Ascending aorta (tissue), 2 donors: ENCODE measurements at regions of chr5 and their contacts with region 1.

Region 1: GRCh38 chr5:172795318-172795977 is 24.5 kb upstream of the DUSP1 start:
- DNase-seq: peak; percentile 93 to 99
- H3K4me3 ChIP-seq: peak overlapping the region in 1 of 2 donors; percentile 33
- H3K27ac ChIP-seq: peak overlapping the region; percentile 94 to 95
- H3K4me1 ChIP-seq: peaks cover 23 to 75% of the 10 kb centered on the region in 2 donors
- H3K27me3 ChIP-seq: no peaks in the 10 kb centered on the region
- CTCF ChIP-seq: no peak

Region 2: GRCh38 chr5:172733131-172733973 is 62.1 kb before region 1 on chr5:
- intact Hi-C with region 1: loop called (anchors 5 kb)
- DNase-seq: peak; percentile 71 to 97
- H3K4me3 ChIP-seq: peak overlapping the region in 1 of 2 donors; percentile 34
- H3K27ac ChIP-seq: peak overlapping the region; percentile 96 to 97
- H3K4me1 ChIP-seq: peaks cover 23 to 37% of the 10 kb centered on the region in 2 donors
- H3K27me3 ChIP-seq: no peaks in the 10 kb centered on the region
- CTCF ChIP-seq: no peak

Region 3: GRCh38 chr5:172816901-172817564 is 21.6 kb after region 1 on chr5:
- intact Hi-C with region 1: no loop called
- DNase-seq: no peak
- H3K4me3 ChIP-seq: no peak overlapping the region
- H3K27ac ChIP-seq: no peak overlapping the region
- H3K4me1 ChIP-seq: no peaks in the 10 kb centered on the region
- H3K27me3 ChIP-seq: no peaks in the 10 kb centered on the region
- CTCF ChIP-seq: no peak

Region 4: DNA sequence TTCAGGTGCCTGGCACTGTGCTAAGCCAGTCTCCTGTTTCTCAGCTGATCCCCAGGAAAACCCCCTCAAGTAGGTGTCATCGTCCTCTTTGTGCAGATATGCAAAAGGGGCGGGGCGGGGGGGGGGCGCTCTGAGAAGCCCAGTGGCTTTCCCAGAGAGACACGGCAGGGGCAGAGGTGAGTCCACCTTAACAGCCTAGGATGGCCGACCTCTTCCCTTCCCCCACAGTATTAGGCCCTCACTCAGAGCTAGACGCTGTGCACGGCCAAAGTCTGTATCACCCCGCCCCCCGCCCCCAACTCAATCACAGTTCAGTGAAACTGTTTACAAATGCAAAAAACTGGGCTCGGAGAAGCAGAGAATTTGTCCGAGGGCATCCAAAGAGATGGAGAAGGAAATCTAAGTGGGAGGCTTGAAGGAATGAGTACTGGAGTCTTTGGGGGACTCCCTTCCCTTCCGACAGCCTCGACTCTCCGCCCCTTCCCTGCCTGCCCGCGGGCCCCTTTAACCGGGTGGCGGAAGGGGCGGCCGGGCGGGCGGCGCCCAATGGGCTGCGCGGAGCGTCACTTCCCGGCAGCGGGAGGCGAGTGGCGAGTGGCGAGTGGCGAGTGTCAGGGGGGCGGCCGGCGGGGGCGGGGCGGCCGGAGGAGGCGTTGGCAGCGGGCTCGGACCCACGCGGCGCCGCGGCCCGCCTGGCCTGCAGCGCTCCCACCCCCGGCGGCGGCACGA is 38.4 kb after region 1 on chr5 and contains the start of gene ERGIC1:
- intact Hi-C with region 1: loop called (anchors 2 kb)
- DNase-seq: peak in 1 of 2 donors; percentile 92
- H3K4me3 ChIP-seq: peak within 1 kb of the TSS; percentile 81 to 95
- H3K27ac ChIP-seq: peak within 1 kb of the TSS; percentile 86 to 89
- H3K4me1 ChIP-seq: peaks cover 0 to 31% of the 10 kb centered on the region in 2 donors
- H3K27me3 ChIP-seq: no peaks in the 10 kb centered on the region
- CTCF ChIP-seq: no peak
- total RNA-seq, gene ERGIC1: 184 TPM

Region 5: DNA sequence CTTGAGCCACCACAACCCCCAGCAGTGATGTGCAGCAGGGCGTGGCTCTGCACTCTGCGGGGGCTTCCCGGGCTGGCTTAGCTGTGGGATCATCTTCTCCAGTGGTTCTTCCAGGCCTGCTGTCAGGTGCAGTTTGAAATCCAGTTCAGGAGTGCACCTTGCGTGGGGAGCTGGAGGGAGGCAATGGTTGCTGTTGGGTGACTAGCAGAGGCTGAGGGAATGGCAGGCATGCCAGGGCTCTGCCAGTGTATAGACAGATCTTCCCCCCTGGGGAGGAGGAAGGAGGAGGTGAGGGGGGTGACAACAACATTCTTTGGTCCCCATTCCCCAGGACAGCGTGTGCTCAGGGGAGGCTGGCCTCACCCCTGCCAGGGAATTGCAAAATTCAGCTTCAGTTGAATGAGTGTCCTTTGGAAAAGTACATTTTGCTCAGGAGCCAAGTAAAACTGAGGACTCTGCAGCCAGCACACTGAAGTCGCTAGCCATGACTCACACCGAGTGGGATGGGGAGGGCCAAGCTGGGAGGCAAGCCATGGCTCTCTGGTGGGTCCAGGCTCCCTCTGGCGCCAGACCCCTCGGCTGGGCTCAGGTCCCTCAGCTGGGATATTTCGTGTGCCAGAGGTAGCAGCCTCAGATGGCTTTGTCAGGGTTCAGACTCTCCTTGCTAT is 73.6 kb after region 1 on chr5:
- intact Hi-C with region 1: loop called (anchors 2 kb)
- DNase-seq: peak; percentile 83 to 98
- H3K4me3 ChIP-seq: peak overlapping the region; percentile 12 to 34
- H3K27ac ChIP-seq: peak overlapping the region; percentile 99
- H3K4me1 ChIP-seq: peaks cover 47 to 80% of the 10 kb centered on the region in 2 donors
- H3K27me3 ChIP-seq: no peaks in the 10 kb centered on the region
- CTCF ChIP-seq: peak; percentile 44 to 56 (median 56)